ENCODE measurements at regions of chr7 and their contacts with region 1.

Region 1: GRCh38 chr7:2863461-2864066 is 19.5 kb upstream of the GNA12 start:
- DNase-seq: peak; percentile 61 to 81 (median 63)
- ATAC-seq: peak; percentile 97
- H3K4me3 ChIP-seq: no peak overlapping the region
- H3K4me1 ChIP-seq: peaks cover 10% of the 10 kb centered on the region
- CTCF ChIP-seq: no peak

Region 2: GRCh38 chr7:2651336-2651735 is 212.2 kb before region 1 on chr7:
- intact Hi-C with region 1: no loop called
- DNase-seq: peak in 1 of 3 donors; percentile 48
- ATAC-seq: no peak
- H3K4me3 ChIP-seq: no peak overlapping the region
- H3K4me1 ChIP-seq: no peaks in the 10 kb centered on the region
- CTCF ChIP-seq: no peak

Region 3: GRCh38 chr7:2920955-2921652 is 57.5 kb after region 1 on chr7:
- intact Hi-C with region 1: no loop called
- DNase-seq: no peak
- ATAC-seq: no peak
- H3K4me3 ChIP-seq: no peak overlapping the region
- H3K4me1 ChIP-seq: no peaks in the 10 kb centered on the region
- CTCF ChIP-seq: no peak

Region 4: DNA sequence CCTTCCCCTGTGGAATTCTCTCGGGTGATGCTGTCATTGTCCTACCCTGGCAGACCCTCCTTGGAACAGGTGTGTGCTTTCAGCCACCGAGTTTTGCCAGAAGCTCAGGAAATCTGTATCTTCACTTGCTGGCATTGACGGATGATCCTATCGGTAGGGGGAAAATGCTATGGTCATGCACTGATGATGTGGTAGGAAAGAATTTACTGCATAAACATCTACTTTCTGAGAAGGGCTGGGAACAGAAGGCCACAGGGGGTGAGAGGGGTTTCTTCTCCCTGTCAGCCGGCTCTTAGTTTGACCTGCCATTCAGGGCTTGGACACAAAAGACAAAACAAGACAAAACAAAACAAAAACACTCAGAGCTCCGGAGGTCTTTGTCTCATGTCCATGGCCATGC is 223.7 kb after region 1 on chr7:
- intact Hi-C with region 1: no loop called
- DNase-seq: no peak
- ATAC-seq: no peak
- H3K4me3 ChIP-seq: no peak overlapping the region
- H3K4me1 ChIP-seq: no peaks in the 10 kb centered on the region
- CTCF ChIP-seq: no peak

Region 5: DNA sequence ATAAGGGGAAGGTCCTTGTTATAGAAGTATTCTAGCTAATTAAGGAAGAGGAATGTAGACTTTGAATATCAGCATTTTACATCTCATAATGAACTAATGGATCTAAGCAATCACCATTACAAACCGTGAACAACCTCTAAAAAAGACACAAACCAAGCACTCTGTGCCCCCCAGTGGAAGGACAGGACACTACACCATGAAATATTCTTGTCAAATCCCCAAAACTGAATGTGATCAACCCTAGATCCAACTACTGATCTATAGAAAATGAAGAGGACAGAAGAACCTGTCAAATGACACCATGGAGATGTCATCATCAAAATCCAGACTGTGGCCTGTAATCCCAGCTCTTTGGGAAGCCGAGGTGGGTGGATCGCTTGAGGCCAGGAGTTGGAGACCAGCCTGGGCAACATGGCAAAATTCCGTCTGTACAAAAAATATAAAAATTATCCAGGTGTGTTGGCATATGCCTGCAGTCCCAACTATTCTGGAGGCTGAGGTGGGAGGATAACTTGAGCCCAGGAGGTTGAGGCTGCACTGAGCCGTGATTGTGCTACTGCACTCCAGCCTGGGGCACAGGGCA is 291.4 kb after region 1 on chr7:
- intact Hi-C with region 1: loop called in 1 of 2 experiments (anchors 10 kb)
- DNase-seq: peak in 1 of 3 donors; percentile 71
- ATAC-seq: peak; percentile 52
- H3K4me3 ChIP-seq: no peak overlapping the region
- H3K4me1 ChIP-seq: no peaks in the 10 kb centered on the region
- CTCF ChIP-seq: peak; percentile 28

Region 6: GRCh38 chr7:3239291-3239691 is 375.7 kb after region 1 on chr7:
- intact Hi-C with region 1: no loop called
- DNase-seq: no peak
- ATAC-seq: no peak
- H3K4me3 ChIP-seq: no peak overlapping the region
- H3K4me1 ChIP-seq: no peaks in the 10 kb centered on the region
- CTCF ChIP-seq: no peak

Measured in mucosa of descending colon (tissue), 3 donors.